ENCODE measurements at regions of chr10 and their contacts with region 1.

Region 1: GRCh38 chr10:34637418-34637911 is 177.6 kb downstream of the PARD3 start:
- DNase-seq: peak; percentile 22 to 67
- ATAC-seq: peak; percentile 72 to 77; a peak in 5 of 6 replicates
- H3K4me3 ChIP-seq: no peak overlapping the region
- H3K27ac ChIP-seq: peak overlapping the region; percentile 79 to 86
- H3K4me1 ChIP-seq: peaks cover 47% of the 10 kb centered on the region
- CTCF ChIP-seq: peak; percentile 97
- EP300 ChIP-seq: no peak
- POLR2A ChIP-seq: no peak
- RAD21 ChIP-seq: peak; percentile 97 to 98

Region 2: DNA sequence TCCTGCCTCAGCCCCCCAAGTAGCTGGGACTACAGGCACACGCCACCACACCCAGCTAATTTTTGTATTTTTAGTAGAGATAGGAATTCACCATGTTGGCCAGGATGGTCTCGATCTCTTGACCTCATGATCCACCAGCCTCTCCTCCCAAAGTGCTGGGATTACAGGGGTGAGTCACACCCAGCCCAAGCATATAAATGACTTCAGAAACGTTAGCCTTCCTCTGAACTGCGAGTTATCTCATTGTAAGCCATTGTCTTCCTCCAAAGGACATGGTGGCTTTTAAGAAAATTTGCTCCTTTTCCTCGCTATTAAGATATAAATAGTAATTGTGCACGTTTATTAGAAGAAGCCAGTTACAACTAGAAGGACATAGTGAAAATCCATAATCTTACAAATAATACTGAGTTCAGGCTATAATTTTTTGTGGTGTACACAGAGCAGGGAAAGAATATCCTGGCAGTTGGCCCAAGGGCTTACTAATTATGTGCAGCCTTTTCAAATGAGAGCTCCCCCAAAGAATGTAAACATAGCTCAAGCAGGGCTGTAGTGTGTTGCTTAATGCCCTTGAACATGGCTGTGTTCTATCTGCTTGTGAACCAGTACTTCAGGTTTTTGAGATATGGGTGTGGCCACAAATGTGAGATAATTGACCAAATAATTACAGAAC is 318.1 kb before region 1 on chr10:
- CTCF ChIA-PET with region 1: interaction called, 19 read pairs
- POLR2A ChIA-PET with region 1: no interaction called
- DNase-seq: peak in 1 of 2 experiments; percentile 20
- ATAC-seq: peak in 1 of 2 experiments; percentile 67; a peak in 4 of 6 replicates
- H3K4me3 ChIP-seq: no peak overlapping the region
- H3K27ac ChIP-seq: peak overlapping the region; percentile 16 to 58; a peak in 4 of 6 replicates
- H3K4me1 ChIP-seq: peaks cover 45% of the 10 kb centered on the region
- CTCF ChIP-seq: no peak
- EP300 ChIP-seq: no peak
- POLR2A ChIP-seq: no peak
- RAD21 ChIP-seq: no peak

Region 3: GRCh38 chr10:34489973-34490745 is 147.3 kb before region 1 on chr10:
- CTCF ChIA-PET with region 1: interaction called, 12 read pairs
- POLR2A ChIA-PET with region 1: no interaction called
- DNase-seq: peak; percentile 27 to 73
- ATAC-seq: peak; percentile 67 to 69; a peak in 5 of 6 replicates
- H3K4me3 ChIP-seq: peak overlapping the region; percentile 6; the same call in 1 of the 3 replicates
- H3K27ac ChIP-seq: peak overlapping the region; percentile 88 to 89
- H3K4me1 ChIP-seq: peaks cover 82% of the 10 kb centered on the region
- CTCF ChIP-seq: peak; percentile 22; the same call in 2 of the 3 replicates
- EP300 ChIP-seq: 0 out of 5 replicates have a peak, but pooled peaks of 1 of the 2 experiments have one; percentile 16
- POLR2A ChIP-seq: no peak
- RAD21 ChIP-seq: peak; percentile 26 to 55; a peak in 4 of 5 replicates

Region 4: GRCh38 chr10:34528320-34528719 is 109.1 kb before region 1 on chr10:
- CTCF ChIA-PET with region 1: interaction called, 84 read pairs
- POLR2A ChIA-PET with region 1: interaction called, 7 read pairs
- DNase-seq: peak; percentile 66 to 94
- ATAC-seq: peak; percentile 69 to 78; a peak in 5 of 6 replicates
- H3K4me3 ChIP-seq: peak overlapping the region; percentile 35
- H3K27ac ChIP-seq: peak overlapping the region; percentile 96 to 97
- H3K4me1 ChIP-seq: peaks cover 51% of the 10 kb centered on the region
- CTCF ChIP-seq: no peak
- EP300 ChIP-seq: peak; percentile 27 to 64; a peak in 3 of 5 replicates
- POLR2A ChIP-seq: no peak
- RAD21 ChIP-seq: peak; percentile 21 to 31; a peak in 2 of 5 replicates

Region 5: GRCh38 chr10:34580643-34581042 is 56.8 kb before region 1 on chr10:
- CTCF ChIA-PET with region 1: interaction called, 19 read pairs
- POLR2A ChIA-PET with region 1: no interaction called
- DNase-seq: peak; percentile 69 to 81
- ATAC-seq: peak; percentile 86 to 89
- H3K4me3 ChIP-seq: 0 out of 3 replicates have a peak overlapping the region, but pooled peaks have one; percentile 6
- H3K27ac ChIP-seq: peak overlapping the region; percentile 65 to 82
- H3K4me1 ChIP-seq: peaks cover 74% of the 10 kb centered on the region
- CTCF ChIP-seq: no peak
- EP300 ChIP-seq: no peak
- POLR2A ChIP-seq: no peak
- RAD21 ChIP-seq: no peak

Region 6: GRCh38 chr10:34650156-34650555 is 12.7 kb after region 1 on chr10:
- CTCF ChIA-PET with region 1: interaction called, 48 read pairs
- POLR2A ChIA-PET with region 1: no interaction called
- DNase-seq: no peak
- ATAC-seq: no peak
- H3K4me3 ChIP-seq: no peak overlapping the region
- H3K27ac ChIP-seq: no peak overlapping the region
- H3K4me1 ChIP-seq: peaks cover under 1% of the 10 kb centered on the region; the same call in 2 of the 3 replicates
- CTCF ChIP-seq: no peak
- EP300 ChIP-seq: no peak
- POLR2A ChIP-seq: no peak
- RAD21 ChIP-seq: no peak

Measured in A549 (cell line).